ENCODE measurements at regions of chr16 and their contacts with region 1.

Region 1: DNA sequence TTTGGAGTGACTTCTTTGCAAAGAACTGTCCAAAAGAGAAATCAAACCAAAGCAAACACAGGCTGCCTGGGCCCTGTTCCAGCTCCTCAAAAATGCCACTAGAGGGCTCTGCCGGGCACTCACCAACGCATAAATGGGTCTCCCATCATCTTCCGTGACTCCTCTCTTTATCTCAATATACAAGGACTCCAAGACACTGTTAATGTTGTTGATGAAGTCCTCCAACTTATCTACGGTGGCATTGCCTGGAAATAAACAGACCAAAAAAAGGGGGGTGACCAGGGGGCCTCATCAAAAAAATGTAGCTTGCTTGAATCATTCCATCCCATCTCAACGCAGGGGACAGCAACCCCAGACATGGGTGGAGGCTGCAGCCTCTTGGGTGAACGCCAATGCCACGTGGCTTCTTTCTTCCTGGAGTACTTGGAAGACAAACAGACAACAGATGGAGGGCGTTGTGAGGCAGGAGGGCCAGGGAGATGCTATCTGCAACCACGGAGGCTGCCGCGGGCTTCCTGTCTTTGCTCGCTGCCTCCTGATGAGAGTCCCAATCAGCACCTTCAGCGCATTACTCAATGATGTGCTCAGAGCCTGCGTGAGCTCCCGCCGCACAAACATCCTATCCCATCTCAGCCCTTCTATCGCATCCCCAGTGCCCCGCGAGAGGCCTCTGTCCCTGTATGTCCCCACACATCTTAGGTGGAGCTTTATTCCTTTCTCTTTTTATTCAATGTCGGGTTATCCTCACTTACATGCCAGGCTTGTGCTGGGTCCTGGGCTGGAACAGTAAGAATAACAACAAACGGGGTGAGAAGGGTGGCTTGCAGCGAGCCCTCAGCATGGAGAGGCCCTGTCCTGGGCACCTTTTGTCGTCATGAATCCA is 32.0 kb downstream of the KDM8 start:
- DNase-seq: peak; percentile 93 to 95
- ATAC-seq: peak; percentile 53

Region 2: DNA sequence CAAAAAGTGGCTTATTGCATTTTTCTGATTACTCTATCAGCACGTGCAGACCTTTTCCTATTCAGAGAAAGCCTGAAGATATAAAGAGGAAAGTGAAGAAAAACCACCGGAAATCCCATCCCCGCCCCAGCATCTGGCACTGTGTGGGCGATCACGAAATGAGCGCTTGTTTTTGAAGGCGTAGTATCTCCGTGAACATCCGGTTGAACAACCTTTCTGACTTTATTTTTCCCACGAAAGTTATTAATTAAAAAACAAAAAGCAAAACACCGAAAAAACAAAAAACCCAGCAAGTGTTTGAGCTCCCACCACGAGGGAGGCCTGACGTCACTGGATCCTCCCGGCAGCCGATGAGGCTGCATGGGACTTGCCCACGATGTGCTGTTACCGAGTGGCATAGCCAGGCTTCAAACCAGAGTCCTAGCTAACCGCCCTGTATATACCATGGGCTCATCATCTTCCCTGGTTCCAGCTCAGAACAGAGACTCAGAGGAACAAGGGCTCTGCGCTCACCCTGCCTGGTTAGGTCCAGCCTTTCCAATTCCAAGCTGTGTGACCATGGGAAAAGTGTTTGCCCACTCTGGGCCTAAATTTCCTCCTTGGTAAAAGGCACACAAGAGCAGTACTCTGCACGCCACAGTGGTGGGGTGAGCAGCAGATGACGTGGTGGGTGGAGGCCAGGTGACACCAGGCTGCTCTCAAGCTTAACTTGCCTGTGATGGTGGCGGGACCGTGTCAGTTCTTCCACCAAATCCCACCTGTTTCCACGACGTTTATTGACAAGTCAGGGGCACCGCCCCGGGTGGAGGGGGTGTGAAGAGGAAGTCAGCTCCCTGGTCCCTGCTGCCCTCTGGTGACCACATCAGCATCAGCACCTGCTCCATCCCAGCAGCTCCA is 132.4 kb after region 1 on chr16:
- intact Hi-C with region 1: loop called in 1 of 2 experiments (anchors 5 kb)
- DNase-seq: peak; percentile 82 to 91
- ATAC-seq: peak; percentile 69

Region 3: GRCh38 chr16:27455700-27456099 is 220.4 kb after region 1 on chr16:
- intact Hi-C with region 1: loop called in 1 of 2 experiments (anchors 5 kb)
- DNase-seq: no peak
- ATAC-seq: no peak

Measured in left colon (tissue), 2 donors.